Testis (tissue), 5 donors: ENCODE measurements at regions of chr1 and their contacts with region 1.

Region 1: DNA sequence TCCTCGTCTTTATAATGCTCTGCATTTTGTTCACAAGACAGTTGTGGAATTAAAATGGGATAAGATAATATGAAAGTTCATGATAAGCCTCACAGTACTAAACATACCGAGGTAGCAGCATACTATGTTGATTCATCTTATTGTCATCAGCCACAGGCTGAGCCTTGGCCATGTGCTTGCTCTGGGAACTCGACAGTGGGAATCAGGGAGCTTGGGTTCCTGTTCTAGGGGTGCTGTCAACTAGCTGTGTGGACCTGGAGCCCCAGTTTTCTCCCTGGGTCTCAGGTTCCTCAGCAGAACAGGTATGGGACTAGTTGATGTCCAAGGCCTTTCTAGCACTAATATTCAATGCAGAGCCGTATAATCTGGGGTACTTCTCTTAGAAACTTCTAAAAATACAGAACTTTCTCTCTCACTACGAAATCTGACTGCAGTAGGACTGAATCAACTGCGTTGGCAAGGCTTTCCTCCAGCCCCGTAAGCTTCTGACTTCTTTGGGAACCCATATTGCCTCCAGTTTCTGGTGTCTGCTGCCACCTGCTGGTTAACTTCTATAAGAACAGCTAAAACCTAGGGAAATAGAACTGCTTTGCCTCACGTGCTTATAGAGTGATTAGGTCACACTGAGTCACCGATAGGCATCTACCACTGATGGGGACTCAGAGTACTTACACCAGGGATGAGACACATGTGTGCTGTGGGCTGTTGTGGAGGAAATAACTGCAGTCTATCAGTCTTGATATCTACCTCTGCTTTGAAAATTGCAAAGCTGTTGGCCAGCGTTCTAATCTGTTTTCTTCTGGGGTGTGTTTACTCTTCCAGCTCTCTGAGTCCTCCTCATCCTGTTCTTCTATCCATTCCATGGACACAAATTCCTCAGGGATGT is 110.9 kb downstream of the RGL1 start:
- DNase-seq: peak; percentile 82
- H3K4me3 ChIP-seq: no peak overlapping the region
- H3K27ac ChIP-seq: peak overlapping the region; percentile 35 to 81
- H3K4me1 ChIP-seq: peaks cover 11% of the 10 kb centered on the region
- H3K27me3 ChIP-seq: no peaks in the 10 kb centered on the region
- CTCF ChIP-seq: peak; percentile 88 to 98 (median 93)
- POLR2A ChIP-seq: no peak

Region 2: GRCh38 chr1:183655562-183656075 is 260.2 kb before region 1 on chr1:
- intact Hi-C with region 1: loop called (anchors 10 kb)
- DNase-seq: peak; percentile 94
- H3K4me3 ChIP-seq: no peak overlapping the region
- H3K27ac ChIP-seq: no peak overlapping the region
- H3K4me1 ChIP-seq: peaks cover 4% of the 10 kb centered on the region
- H3K27me3 ChIP-seq: no peaks in the 10 kb centered on the region
- CTCF ChIP-seq: peak; percentile 89 to 94 (median 94)
- POLR2A ChIP-seq: no peak